ENCODE measurements at regions of chr13 and their contacts with region 1.

Region 1: GRCh38 chr13:109764470-109765291 is 21.7 kb downstream of the IRS2 start:
- DNase-seq: peak; percentile 37
- ATAC-seq: peak; percentile 81
- H3K4me3 Mint-ChIP-seq: no peak overlapping the region
- H3K27ac Mint-ChIP-seq: no peak overlapping the region
- H3K4me1 Mint-ChIP-seq: peaks cover 14% of the 10 kb centered on the region
- H3K27me3 Mint-ChIP-seq: no peaks in the 10 kb centered on the region

Region 2: DNA sequence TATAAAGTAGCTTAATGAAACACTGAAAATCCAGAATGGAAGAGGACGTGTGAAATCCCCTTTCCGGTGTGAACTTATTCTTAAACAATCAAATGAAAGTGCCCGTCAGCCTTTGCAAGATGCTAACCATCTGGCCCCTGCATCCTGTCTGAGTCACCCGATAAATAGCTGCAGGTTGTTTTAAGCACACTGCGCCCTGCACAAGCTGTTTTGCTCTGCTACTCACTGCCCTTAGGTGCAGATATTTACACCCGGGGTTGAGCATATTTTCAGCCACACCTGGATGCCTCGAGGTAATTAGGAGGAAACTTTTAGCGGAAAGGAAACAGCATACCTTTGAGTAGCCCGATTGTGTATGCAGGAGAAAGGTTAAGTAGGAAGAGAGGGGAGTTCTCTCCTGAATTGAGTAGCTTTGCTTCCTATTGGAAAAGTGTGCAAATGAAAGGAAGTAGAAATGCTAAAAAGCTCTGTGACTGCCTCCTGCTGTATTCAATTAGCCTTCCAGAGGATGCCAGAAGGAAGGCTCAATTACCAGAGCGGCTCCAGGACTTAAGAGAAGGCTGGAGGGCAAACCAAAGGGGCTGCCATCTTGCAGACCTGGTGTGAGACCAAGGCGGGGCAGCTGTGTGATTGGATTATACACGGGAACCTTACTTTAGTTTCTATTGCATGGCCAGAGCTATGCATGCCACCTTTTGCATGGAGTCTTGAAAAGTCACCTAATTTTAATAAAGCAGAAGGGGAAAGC is 20.8 kb before region 1 on chr13:
- CTCF ChIA-PET with region 1: interaction called, 10 read pairs
- POLR2A ChIA-PET with region 1: no interaction called
- DNase-seq: peak; percentile 55
- ATAC-seq: peak; percentile 83
- H3K4me3 Mint-ChIP-seq: no peak overlapping the region
- H3K27ac Mint-ChIP-seq: no peak overlapping the region
- H3K4me1 Mint-ChIP-seq: peaks cover 15% of the 10 kb centered on the region
- H3K27me3 Mint-ChIP-seq: peaks cover 11% of the 10 kb centered on the region

Region 3: GRCh38 chr13:109803830-109804229 is 39.1 kb after region 1 on chr13:
- CTCF ChIA-PET with region 1: no interaction called
- POLR2A ChIA-PET with region 1: no interaction called
- DNase-seq: no peak
- ATAC-seq: no peak
- H3K4me3 Mint-ChIP-seq: no peak overlapping the region
- H3K27ac Mint-ChIP-seq: no peak overlapping the region
- H3K4me1 Mint-ChIP-seq: no peaks in the 10 kb centered on the region
- H3K27me3 Mint-ChIP-seq: peaks cover 16% of the 10 kb centered on the region